Activated CD8-positive, alpha-beta memory T cell treated with anti-CD3 and anti-CD28 coated beads, Interleukin-2, amount 10 ng/mL, durations not matched to agents 7 days and 5 days (primary cell): ENCODE measurements at regions of chr20 and their contacts with region 1.

Region 1: GRCh38 chr20:3051385-3052019 is 5.7 kb downstream of the MRPS26 start:
- DNase-seq: no peak
- ATAC-seq: no peak
- H3K4me3 Mint-ChIP-seq: no peak overlapping the region
- H3K27ac Mint-ChIP-seq: no peak overlapping the region
- H3K4me1 Mint-ChIP-seq: peaks cover 31% of the 10 kb centered on the region
- H3K27me3 Mint-ChIP-seq: no peaks in the 10 kb centered on the region

Region 2: DNA sequence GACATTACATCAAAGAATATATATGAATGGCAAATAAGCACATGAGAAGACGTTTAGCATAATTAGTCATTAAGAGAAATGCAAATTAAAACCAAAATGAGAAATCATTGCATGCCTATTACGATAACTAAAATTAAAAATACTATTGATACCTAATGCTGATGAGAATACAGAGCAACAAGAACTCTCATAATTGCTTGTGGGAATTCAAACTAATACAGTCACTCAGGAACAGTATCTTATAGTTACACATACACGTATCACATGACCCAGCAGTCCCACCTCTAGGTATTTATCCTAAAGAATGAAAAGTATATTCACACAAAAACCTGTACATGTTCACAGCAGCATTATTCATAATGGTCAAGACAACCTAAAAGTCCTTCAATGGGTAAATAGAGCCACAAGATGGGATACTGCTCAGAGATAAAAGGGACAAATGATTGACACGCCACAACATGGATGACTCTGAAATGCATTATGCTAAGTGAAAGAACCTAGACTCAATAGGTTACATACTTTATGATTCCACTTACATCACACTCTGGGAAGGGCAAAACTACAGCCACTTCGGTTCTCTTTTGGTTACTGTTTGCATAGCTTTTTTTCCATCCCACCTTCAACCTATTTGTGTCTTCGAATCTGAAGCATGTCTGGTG is 267.5 kb before region 1 on chr20:
- CTCF ChIA-PET with region 1: no interaction called
- DNase-seq: no peak
- ATAC-seq: no peak
- H3K4me3 Mint-ChIP-seq: no peak overlapping the region
- H3K27ac Mint-ChIP-seq: no peak overlapping the region
- H3K4me1 Mint-ChIP-seq: no peaks in the 10 kb centered on the region
- H3K27me3 Mint-ChIP-seq: peaks cover 56% of the 10 kb centered on the region

Region 3: GRCh38 chr20:3037654-3038053 is 13.8 kb before region 1 on chr20:
- CTCF ChIA-PET with region 1: interaction called, 18 read pairs
- DNase-seq: no peak
- ATAC-seq: no peak
- H3K4me3 Mint-ChIP-seq: no peak overlapping the region
- H3K27ac Mint-ChIP-seq: no peak overlapping the region
- H3K4me1 Mint-ChIP-seq: peaks cover 18% of the 10 kb centered on the region
- H3K27me3 Mint-ChIP-seq: no peaks in the 10 kb centered on the region

Region 4: DNA sequence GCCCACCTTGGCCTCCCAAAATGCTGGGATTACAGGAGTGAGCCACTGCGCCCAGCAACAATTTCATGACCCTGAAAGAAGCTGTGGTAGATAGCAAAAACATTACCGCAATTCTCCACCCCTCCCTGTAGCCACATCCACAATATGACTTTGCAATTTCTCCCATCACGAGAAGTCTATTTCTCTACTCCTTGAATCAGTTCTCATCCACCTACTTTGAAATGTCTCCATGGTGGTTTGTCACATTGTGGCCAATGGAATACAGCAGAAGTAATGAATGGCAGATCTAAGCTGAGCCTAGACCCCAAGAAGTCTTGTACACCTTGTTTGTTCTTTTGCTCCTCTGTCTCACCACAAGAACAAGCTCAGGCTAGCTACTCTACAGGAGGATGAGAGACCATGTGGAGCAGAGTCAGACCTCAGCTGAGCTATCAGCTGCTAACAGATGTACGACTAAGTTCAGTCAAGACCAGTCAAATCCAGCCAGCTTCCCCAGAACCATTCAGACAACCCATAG is 26.2 kb after region 1 on chr20:
- CTCF ChIA-PET with region 1: interaction called, 10 read pairs
- DNase-seq: peak; percentile 60
- ATAC-seq: peak; percentile 65
- H3K4me3 Mint-ChIP-seq: no peak overlapping the region
- H3K27ac Mint-ChIP-seq: peak overlapping the region; percentile 48
- H3K4me1 Mint-ChIP-seq: peaks cover 19% of the 10 kb centered on the region
- H3K27me3 Mint-ChIP-seq: peaks cover 55% of the 10 kb centered on the region

Region 5: GRCh38 chr20:3115190-3116107 is 63.9 kb after region 1 on chr20:
- CTCF ChIA-PET with region 1: interaction called, 28 read pairs
- DNase-seq: no peak
- ATAC-seq: peak; percentile 51
- H3K4me3 Mint-ChIP-seq: no peak overlapping the region
- H3K27ac Mint-ChIP-seq: no peak overlapping the region
- H3K4me1 Mint-ChIP-seq: no peaks in the 10 kb centered on the region
- H3K27me3 Mint-ChIP-seq: no peaks in the 10 kb centered on the region

Region 6: DNA sequence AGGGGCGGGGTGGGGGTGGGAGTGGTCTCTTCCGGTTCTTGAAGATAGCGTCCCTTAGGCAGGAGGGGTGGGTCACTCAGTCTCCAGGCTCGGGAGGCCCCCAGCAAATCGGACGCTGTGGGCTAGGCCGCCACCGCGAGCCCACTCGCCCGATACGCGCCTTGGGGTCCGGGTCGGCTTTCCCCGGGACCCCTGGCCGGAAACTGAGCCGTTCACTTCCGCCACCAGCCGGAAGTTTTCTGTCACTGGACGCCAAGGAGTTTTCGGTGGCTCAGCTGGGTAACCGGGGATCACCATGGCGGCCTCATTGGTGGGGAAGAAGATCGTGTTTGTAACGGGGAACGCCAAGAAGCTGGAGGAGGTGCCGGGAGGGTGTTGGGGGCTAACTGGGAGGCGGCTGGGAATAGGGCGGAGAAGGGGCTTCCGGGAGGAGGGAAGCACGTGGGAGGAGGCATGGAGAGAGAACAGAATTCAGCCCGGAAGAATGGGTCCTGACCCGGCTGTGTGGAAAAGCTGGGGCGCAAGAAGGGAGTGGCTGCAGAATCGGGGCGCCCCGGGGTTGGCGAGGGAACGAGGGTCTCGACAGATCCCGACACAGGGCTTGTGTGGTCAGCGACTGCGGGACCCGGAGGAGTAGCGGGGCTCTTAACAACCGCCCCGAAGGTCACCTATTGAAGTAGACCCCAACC is 157.9 kb after region 1 on chr20 and contains the start of gene ITPA:
- CTCF ChIA-PET with region 1: interaction called, 10 read pairs
- DNase-seq: peak; percentile 79
- ATAC-seq: peak; percentile 58
- H3K4me3 Mint-ChIP-seq: peak within 1 kb of the TSS; percentile 85
- H3K27ac Mint-ChIP-seq: peak within 1 kb of the TSS; percentile 90
- H3K4me1 Mint-ChIP-seq: peaks cover 21% of the 10 kb centered on the region
- H3K27me3 Mint-ChIP-seq: no peaks in the 10 kb centered on the region
- total RNA-seq, gene ITPA: 51.9 to 71.7 TPM